ENCODE measurements at regions of chr10 and their contacts with region 1.

Region 1: GRCh38 chr10:88835096-88835909 is 16.3 kb downstream of the ANKRD22 start:
- DNase-seq: peak; percentile 80 to 86 (median 82)
- H3K4me3 ChIP-seq: no peak overlapping the region
- H3K4me3 Mint-ChIP-seq: no peak overlapping the region
- H3K27ac ChIP-seq: no peak overlapping the region
- H3K27ac Mint-ChIP-seq: peak overlapping the region in 1 of 7 donors; percentile 29
- H3K4me1 ChIP-seq: peaks cover 46% of the 10 kb centered on the region
- H3K4me1 Mint-ChIP-seq: peaks cover 26 to 34% (median 30%) of the 10 kb centered on the region in 4 donors
- H3K27me3 ChIP-seq: no peaks in the 10 kb centered on the region
- H3K27me3 Mint-ChIP-seq: no peaks in the 10 kb centered on the region

Region 2: DNA sequence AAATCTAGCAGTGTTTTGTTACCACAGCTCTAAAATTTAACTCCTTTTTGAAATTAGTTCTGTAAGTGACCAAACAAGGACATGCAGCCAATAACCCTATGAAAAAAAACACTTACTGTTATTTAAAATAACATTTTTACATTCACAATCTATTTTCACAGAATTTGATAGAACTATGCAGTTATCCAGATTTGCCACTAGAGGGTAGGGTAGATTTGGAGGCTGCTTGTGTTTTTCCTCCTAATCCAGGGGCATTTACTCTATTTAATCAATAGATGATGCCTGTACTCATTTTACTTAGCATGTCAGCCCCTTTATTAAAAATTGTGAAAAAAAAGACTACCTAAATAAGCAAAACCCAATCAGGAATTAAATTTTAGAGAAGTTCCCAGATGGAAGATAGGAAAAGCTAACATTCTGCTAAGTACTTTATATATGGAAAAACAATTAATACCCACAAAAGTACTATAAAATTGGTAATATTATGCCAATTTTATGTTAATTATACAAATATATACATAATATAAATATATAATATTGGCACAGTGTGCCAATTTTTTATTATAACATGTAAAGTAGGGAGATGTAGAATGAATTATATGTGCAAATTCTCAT is 147.3 kb before region 1 on chr10:
- CTCF ChIA-PET with region 1: interaction called, 21 read pairs
- POLR2A ChIA-PET with region 1: interaction called, 3 read pairs
- intact Hi-C with region 1: loop called (anchors 1 kb)
- DNase-seq: peak in 4 of 5 donors; percentile 18 to 26 (median 21)
- H3K4me3 ChIP-seq: no peak overlapping the region
- H3K4me3 Mint-ChIP-seq: no peak overlapping the region
- H3K27ac ChIP-seq: no peak overlapping the region
- H3K27ac Mint-ChIP-seq: no peak overlapping the region
- H3K4me1 ChIP-seq: no peaks in the 10 kb centered on the region
- H3K4me1 Mint-ChIP-seq: no peaks in the 10 kb centered on the region
- H3K27me3 ChIP-seq: no peaks in the 10 kb centered on the region
- H3K27me3 Mint-ChIP-seq: peaks cover 0 to 2% of the 10 kb centered on the region in 2 donors

Region 3: GRCh38 chr10:88848499-88848898 is 13.2 kb after region 1 on chr10:
- CTCF ChIA-PET with region 1: interaction called, 35 read pairs
- POLR2A ChIA-PET with region 1: no interaction called
- intact Hi-C with region 1: no loop called
- DNase-seq: no peak
- H3K4me3 ChIP-seq: no peak overlapping the region
- H3K4me3 Mint-ChIP-seq: no peak overlapping the region
- H3K27ac ChIP-seq: no peak overlapping the region
- H3K27ac Mint-ChIP-seq: peak overlapping the region in 1 of 7 donors; percentile 13
- H3K4me1 ChIP-seq: no peaks in the 10 kb centered on the region
- H3K4me1 Mint-ChIP-seq: peaks cover 0 to 5% (median 3%) of the 10 kb centered on the region in 4 donors
- H3K27me3 ChIP-seq: no peaks in the 10 kb centered on the region
- H3K27me3 Mint-ChIP-seq: peaks cover 5 to 6% of the 10 kb centered on the region in 2 donors

Region 4: DNA sequence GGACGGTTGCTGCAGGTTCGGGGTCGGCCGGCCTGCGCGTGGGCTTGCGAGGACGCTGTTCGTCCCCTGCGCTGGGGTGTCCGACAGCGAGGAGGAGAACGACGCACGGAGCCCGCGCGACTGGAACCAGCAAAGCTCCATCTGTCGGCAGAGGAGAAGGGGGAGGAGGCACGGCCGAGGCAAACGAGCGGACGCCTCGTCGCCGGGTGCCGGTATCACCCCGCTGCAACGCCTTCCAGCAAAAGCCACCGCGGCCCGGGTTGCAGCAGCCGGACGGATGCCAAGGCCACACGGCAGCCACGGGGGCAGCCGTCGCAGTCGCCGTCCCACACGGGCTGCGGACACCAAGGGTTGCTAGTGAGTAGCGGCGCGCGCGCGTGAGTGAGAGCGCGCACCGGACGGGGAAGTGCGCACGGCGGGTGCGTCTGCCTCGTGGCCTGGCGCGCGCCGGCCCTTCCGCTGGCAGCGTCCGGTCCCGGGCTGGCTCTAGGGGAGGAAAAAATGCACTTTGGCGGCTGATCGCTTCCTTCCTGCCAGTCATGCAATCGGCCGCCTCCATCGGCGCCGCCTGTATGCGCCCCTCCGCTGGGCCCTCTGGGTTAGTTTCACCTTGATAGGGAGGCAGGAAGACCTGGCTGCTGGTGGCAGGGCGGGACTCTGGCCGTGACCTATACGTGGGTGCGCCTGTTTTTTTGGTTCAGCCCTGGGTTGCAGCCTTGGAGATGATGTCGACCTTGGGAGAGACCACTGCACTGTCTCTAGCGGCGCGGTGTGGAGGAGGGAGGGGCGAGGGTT is 45.2 kb after region 1 on chr10:
- CTCF ChIA-PET with region 1: interaction called, 40 read pairs
- POLR2A ChIA-PET with region 1: interaction called, 26 read pairs
- intact Hi-C with region 1: loop called (anchors 1 kb)
- DNase-seq: peak; percentile 74 to 81 (median 78)
- H3K4me3 ChIP-seq: peak overlapping the region; percentile 70 to 71
- H3K4me3 Mint-ChIP-seq: peak overlapping the region; percentile 98 to 99 (median 99)
- H3K27ac ChIP-seq: peak overlapping the region; percentile 70
- H3K27ac Mint-ChIP-seq: peak overlapping the region; percentile 91 to 98 (median 96)
- H3K4me1 ChIP-seq: peaks cover 61% of the 10 kb centered on the region
- H3K4me1 Mint-ChIP-seq: peaks cover 48 to 78% (median 57%) of the 10 kb centered on the region in 4 donors
- H3K27me3 ChIP-seq: no peaks in the 10 kb centered on the region
- H3K27me3 Mint-ChIP-seq: no peaks in the 10 kb centered on the region

Region 5: GRCh38 chr10:88923520-88923919 is 88.2 kb after region 1 on chr10:
- CTCF ChIA-PET with region 1: interaction called, 507 read pairs
- POLR2A ChIA-PET with region 1: interaction called, 3 read pairs
- intact Hi-C with region 1: no loop called
- DNase-seq: no peak
- H3K4me3 ChIP-seq: no peak overlapping the region
- H3K4me3 Mint-ChIP-seq: no peak overlapping the region
- H3K27ac ChIP-seq: no peak overlapping the region
- H3K27ac Mint-ChIP-seq: peak overlapping the region in 1 of 7 donors; percentile 30
- H3K4me1 ChIP-seq: no peaks in the 10 kb centered on the region
- H3K4me1 Mint-ChIP-seq: peaks cover 0 to 1% (median under 1%) of the 10 kb centered on the region in 4 donors
- H3K27me3 ChIP-seq: no peaks in the 10 kb centered on the region
- H3K27me3 Mint-ChIP-seq: no peaks in the 10 kb centered on the region

Region 6: GRCh38 chr10:89217057-89217990 is 382.0 kb after region 1 on chr10:
- CTCF ChIA-PET with region 1: interaction called, 33 read pairs
- POLR2A ChIA-PET with region 1: no interaction called
- intact Hi-C with region 1: loop called (anchors 1 kb)
- DNase-seq: peak; percentile 59 to 64 (median 61)
- H3K4me3 ChIP-seq: no peak overlapping the region
- H3K4me3 Mint-ChIP-seq: peak overlapping the region in 2 of 8 donors; percentile 29 to 67
- H3K27ac ChIP-seq: peak overlapping the region; percentile 33
- H3K27ac Mint-ChIP-seq: peak overlapping the region in 4 of 7 donors; percentile 4 to 90 (median 70)
- H3K4me1 ChIP-seq: peaks cover 7% of the 10 kb centered on the region
- H3K4me1 Mint-ChIP-seq: peaks cover 9 to 11% (median 10%) of the 10 kb centered on the region in 4 donors
- H3K27me3 ChIP-seq: no peaks in the 10 kb centered on the region
- H3K27me3 Mint-ChIP-seq: no peaks in the 10 kb centered on the region

Measured in CD4-positive, alpha-beta memory T cell (primary cell).